Activated CD4-positive, alpha-beta memory T cell treated with anti-CD3 and anti-CD28 coated beads for 36 hours (primary cell): ENCODE measurements at regions of chr7 and their contacts with region 1.

Region 1: DNA sequence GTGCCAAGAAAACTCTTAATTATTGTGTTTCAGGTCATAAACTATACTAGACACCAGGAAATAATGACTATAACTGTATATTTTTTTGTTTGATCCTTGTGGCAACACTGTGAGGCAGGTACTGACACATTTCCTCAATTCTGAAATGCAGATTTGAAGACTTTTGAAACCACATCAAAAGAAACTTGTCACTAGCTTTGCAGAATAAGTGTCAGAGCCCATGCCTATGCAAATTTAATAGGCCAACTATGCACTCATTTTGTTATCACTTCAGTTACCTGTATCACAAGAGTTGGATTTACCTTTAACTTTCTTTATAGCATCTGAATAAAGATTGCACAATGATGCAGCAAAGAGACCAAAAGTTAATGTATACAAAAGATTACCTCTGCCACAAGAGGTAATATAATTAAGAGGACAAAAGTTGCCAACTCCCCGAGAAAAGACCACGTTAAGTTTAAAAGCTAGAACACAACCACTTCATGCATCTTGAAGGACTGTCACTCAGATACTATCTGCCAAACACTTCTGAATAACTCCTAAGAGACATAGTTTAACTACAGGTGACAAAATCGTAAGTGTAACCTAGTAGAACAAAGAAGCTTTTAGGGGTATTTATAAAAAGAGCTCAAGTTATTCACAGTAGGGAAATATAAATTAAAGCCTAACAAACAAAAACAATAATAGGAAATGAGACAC is 80.5 kb downstream of the ELAPOR2 start:
- DNase-seq: no peak
- H3K4me3 Mint-ChIP-seq: no peak overlapping the region
- H3K27ac Mint-ChIP-seq: no peak overlapping the region
- H3K4me1 Mint-ChIP-seq: peaks cover 41% of the 10 kb centered on the region
- H3K27me3 Mint-ChIP-seq: no peaks in the 10 kb centered on the region

Region 2: DNA sequence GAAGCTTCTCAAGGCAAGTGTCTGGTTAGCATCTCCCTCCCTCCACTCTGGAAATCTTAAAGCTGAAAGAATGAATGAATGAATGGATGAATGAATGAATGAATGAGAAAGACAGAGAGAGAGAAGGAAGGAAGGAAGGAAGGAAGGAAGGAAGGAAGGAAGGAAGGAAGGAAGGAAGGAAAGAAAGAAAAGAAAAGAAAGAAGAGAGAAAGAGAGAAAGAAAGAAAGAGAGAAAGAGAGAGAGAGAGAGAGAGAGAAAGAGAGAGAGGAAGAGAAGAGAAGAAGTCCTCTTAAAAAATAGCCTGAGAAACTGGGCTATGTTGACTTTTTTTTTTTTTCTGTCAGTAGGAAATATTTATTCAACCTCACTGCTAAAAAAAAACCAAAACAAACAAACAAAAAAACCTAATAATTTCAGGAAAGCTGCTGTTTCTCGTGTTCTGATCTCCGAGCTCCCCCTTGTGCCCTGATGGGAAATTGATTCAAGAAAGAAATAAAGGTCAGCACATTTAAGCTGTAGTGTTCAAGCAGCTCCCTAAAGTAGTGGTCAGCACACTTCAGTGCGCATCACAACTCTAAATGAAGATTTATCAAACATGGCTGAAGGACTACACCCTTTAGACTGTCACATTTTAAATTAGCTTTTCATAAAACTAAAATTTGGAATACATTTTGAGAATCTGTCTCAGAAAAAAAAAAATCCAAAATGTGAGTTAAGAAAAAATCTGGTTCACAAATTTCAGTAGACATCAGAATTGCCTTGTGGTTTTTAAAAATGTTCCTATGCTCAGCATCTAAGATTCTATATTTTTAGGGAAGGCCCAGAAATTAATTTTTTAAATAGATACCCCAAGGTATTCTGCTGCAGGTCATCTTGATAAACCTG is 73.8 kb before region 1 on chr7:
- CTCF ChIA-PET with region 1: no interaction called
- POLR2A ChIA-PET with region 1: no interaction called
- intact Hi-C with region 1: no loop called
- DNase-seq: no peak
- H3K4me3 Mint-ChIP-seq: no peak overlapping the region
- H3K27ac Mint-ChIP-seq: no peak overlapping the region
- H3K4me1 Mint-ChIP-seq: peaks cover 3% of the 10 kb centered on the region
- H3K27me3 Mint-ChIP-seq: no peaks in the 10 kb centered on the region

Region 3: GRCh38 chr7:86932038-86932512 is 46.9 kb before region 1 on chr7:
- CTCF ChIA-PET with region 1: no interaction called
- POLR2A ChIA-PET with region 1: no interaction called
- intact Hi-C with region 1: loop called (anchors 1 kb)
- DNase-seq: peak; percentile 27
- H3K4me3 Mint-ChIP-seq: no peak overlapping the region
- H3K27ac Mint-ChIP-seq: no peak overlapping the region
- H3K4me1 Mint-ChIP-seq: peaks cover 9% of the 10 kb centered on the region
- H3K27me3 Mint-ChIP-seq: no peaks in the 10 kb centered on the region

Region 4: DNA sequence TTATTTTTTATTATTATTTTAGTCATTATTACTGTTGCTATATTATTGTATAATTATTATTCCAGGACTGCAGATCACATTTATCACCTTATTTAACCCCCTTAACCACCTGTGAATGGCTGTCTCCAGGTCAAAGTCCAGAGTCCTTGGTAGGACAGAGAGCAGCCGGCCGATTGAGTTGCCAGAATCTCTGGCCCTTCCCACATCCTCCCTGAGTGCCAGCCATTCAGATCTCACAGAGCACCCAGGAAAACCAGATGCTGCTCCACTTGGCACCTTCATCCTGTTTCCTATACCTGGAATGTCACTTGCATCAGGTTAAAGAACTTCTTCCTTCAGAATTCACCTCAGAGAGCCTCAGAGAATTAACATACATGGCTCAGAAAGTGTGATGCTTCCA is 20.6 kb before region 1 on chr7:
- CTCF ChIA-PET with region 1: no interaction called
- POLR2A ChIA-PET with region 1: no interaction called
- intact Hi-C with region 1: no loop called
- DNase-seq: no peak
- H3K4me3 Mint-ChIP-seq: no peak overlapping the region
- H3K27ac Mint-ChIP-seq: no peak overlapping the region
- H3K4me1 Mint-ChIP-seq: peaks cover 5% of the 10 kb centered on the region
- H3K27me3 Mint-ChIP-seq: no peaks in the 10 kb centered on the region

Region 5: GRCh38 chr7:87003872-87004798 is 25.2 kb after region 1 on chr7:
- CTCF ChIA-PET with region 1: no interaction called
- POLR2A ChIA-PET with region 1: no interaction called
- intact Hi-C with region 1: no loop called
- DNase-seq: no peak
- H3K4me3 Mint-ChIP-seq: no peak overlapping the region
- H3K27ac Mint-ChIP-seq: no peak overlapping the region
- H3K4me1 Mint-ChIP-seq: peaks cover 9% of the 10 kb centered on the region
- H3K27me3 Mint-ChIP-seq: peaks cover 2% of the 10 kb centered on the region

Region 6: DNA sequence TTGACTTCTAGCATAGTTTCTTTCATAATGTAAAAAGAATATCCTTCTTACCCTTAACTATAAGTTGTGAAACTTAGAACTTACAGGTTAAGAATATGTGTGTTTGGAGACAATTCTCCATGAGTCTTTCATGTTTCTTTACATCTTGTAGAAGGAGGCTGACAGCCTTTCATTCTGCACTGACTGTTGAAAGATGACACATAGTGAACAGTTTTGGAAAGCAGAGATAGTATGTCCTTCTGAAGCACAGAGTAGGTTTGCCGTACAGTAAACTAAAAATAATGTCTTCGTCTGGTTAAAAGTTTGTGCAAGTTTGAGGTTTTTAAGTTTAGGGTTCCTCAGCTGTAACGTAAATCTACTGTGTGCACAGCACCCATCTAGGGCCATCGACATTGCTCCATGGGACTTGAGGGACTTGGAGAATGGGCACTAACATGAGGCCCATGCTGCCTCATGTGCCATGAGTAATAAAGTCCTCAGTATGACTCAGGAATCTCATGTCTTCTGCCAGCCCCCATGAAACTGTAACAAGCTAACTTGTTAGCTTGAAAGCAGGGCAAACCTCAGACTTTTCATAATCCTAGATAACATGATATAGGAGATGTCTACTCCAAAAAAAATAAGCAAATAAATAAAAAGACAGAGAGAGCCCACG is 105.0 kb after region 1 on chr7:
- CTCF ChIA-PET with region 1: no interaction called
- POLR2A ChIA-PET with region 1: no interaction called
- intact Hi-C with region 1: loop called (anchors 2 kb)
- DNase-seq: peak; percentile 11
- H3K4me3 Mint-ChIP-seq: no peak overlapping the region
- H3K27ac Mint-ChIP-seq: no peak overlapping the region
- H3K4me1 Mint-ChIP-seq: peaks cover 9% of the 10 kb centered on the region
- H3K27me3 Mint-ChIP-seq: peaks cover 2% of the 10 kb centered on the region

Region 7: DNA sequence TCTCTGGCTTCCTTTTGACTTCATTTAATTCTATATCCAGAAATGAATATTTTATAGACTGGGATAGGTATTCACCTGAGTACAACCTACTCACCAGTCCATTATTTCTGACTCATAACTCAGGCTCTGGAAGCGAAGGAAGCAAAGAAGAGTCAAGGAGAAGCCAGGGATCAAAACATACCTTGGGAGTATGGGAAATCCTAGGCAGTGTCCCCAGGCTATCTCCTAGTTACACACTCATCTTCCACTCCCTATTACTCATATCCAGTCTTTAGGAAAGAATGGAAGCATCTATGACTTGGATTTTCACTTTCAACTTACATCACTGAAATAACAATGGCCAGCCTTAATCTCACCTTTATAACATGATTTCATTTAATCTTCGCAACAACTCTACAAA is 121.4 kb after region 1 on chr7:
- CTCF ChIA-PET with region 1: no interaction called
- POLR2A ChIA-PET with region 1: no interaction called
- intact Hi-C with region 1: no loop called
- DNase-seq: no peak
- H3K4me3 Mint-ChIP-seq: no peak overlapping the region
- H3K27ac Mint-ChIP-seq: no peak overlapping the region
- H3K4me1 Mint-ChIP-seq: no peaks in the 10 kb centered on the region
- H3K27me3 Mint-ChIP-seq: peaks cover 11% of the 10 kb centered on the region